ENCODE measurements at regions of chr2 and their contacts with region 1.

Region 1: GRCh38 chr2:144183727-144184126 is 336.2 kb downstream of the ZEB2 start:
- DNase-seq: peak; percentile 37 to 96 (median 71)
- ATAC-seq: peak; percentile 98
- H3K4me3 ChIP-seq: peak overlapping the region in 1 of 2 experiments; percentile 31
- H3K4me3 Mint-ChIP-seq: peak overlapping the region; percentile 76
- H3K27ac ChIP-seq: peak overlapping the region in 1 of 2 experiments; percentile 38
- H3K27ac Mint-ChIP-seq: peak overlapping the region; percentile 71
- H3K4me1 ChIP-seq: peaks cover 12% of the 10 kb centered on the region
- H3K4me1 Mint-ChIP-seq: peaks cover 30% of the 10 kb centered on the region
- H3K27me3 ChIP-seq: no peaks in the 10 kb centered on the region
- H3K27me3 Mint-ChIP-seq: no peaks in the 10 kb centered on the region
- CTCF ChIP-seq: no peak

Region 2: DNA sequence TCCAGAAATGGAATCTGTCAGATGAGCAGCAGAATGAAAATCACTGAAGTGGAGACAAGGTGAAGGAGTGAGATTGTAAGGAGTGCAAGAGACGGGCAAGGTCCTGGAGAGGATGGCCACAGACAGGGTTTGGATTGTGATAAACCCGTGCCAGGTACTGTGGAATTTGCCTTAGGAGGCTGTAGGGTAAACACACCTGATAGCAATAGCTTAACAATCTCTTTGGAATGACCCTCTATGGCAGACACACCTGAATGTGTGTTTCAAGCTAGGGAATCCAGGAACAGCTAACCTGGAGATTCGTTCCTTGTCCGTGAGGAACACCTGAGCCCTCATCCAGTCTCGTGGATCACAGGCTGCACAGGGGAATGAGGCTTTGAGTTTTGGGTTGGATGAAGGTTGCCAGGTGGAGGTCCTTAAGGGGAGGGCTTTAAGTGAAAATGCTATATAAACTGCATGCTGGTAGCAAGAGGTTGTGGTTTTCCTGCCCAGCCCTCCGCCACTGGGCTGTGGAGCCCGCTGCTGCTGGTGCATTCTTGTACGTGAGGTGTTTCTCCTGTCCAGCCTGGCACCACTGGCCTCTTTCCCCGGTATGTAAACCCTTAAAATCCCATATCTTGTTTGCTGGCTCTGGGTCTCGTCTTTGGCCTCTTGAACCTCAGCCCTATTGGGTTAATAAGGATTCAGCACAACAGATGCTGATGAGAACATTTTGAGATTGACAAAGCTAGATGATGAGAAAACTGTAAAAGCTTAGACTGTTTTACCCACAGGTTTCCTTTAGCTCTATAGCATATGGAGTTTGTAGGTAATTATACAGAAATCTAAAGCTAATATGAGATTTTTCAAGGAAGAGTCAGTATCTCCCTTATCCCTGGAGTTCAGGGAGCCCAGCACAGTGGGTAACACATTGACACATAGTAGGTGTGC is 936.6 kb before region 1 on chr2:
- CTCF ChIA-PET with region 1: no interaction called
- POLR2A ChIA-PET with region 1: no interaction called
- intact Hi-C with region 1: loop called in 1 of 2 experiments (anchors 10 kb)
- DNase-seq: peak in 6 of 9 experiments; percentile 16 to 68 (median 42)
- ATAC-seq: peak; percentile 60
- H3K4me3 ChIP-seq: peak overlapping the region; percentile 19 to 52
- H3K4me3 Mint-ChIP-seq: no peak overlapping the region
- H3K27ac ChIP-seq: peak overlapping the region; percentile 2 to 70
- H3K27ac Mint-ChIP-seq: no peak overlapping the region
- H3K4me1 ChIP-seq: peaks cover 28% of the 10 kb centered on the region
- H3K4me1 Mint-ChIP-seq: peaks cover 24% of the 10 kb centered on the region
- H3K27me3 ChIP-seq: no peaks in the 10 kb centered on the region
- H3K27me3 Mint-ChIP-seq: no peaks in the 10 kb centered on the region
- CTCF ChIP-seq: no peak

Region 3: GRCh38 chr2:144032566-144032965 is 151.2 kb before region 1 on chr2:
- CTCF ChIA-PET with region 1: no interaction called
- POLR2A ChIA-PET with region 1: no interaction called
- intact Hi-C with region 1: no loop called
- DNase-seq: no peak
- ATAC-seq: no peak
- H3K4me3 ChIP-seq: no peak overlapping the region
- H3K4me3 Mint-ChIP-seq: no peak overlapping the region
- H3K27ac ChIP-seq: no peak overlapping the region
- H3K27ac Mint-ChIP-seq: no peak overlapping the region
- H3K4me1 ChIP-seq: no peaks in the 10 kb centered on the region
- H3K4me1 Mint-ChIP-seq: no peaks in the 10 kb centered on the region
- H3K27me3 ChIP-seq: no peaks in the 10 kb centered on the region
- H3K27me3 Mint-ChIP-seq: no peaks in the 10 kb centered on the region
- CTCF ChIP-seq: no peak

Region 4: DNA sequence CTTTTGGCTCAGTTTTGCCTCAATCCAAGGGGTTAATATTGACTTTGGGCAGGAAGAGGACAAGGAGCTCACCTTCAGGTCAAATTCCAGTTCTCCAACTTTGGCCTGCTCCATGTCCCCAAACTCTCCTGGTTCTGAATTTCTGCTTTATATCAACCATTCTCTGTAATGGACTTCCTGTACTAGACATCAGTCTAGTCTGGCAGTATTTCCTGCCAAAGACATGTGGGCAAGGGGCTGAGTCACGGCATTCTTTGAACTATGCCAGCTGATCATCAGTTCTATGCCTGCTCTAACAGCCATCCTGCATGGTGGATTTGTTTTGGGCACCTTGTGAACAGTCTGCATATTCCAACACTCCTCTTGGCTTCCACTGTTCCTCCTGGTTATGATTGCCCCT is 136.8 kb after region 1 on chr2:
- CTCF ChIA-PET with region 1: no interaction called
- POLR2A ChIA-PET with region 1: no interaction called
- intact Hi-C with region 1: loop called in 1 of 2 experiments (anchors 2 kb)
- DNase-seq: peak in 8 of 9 experiments; percentile 41 to 87 (median 72)
- ATAC-seq: peak; percentile 53
- H3K4me3 ChIP-seq: no peak overlapping the region
- H3K4me3 Mint-ChIP-seq: peak overlapping the region; percentile 27
- H3K27ac ChIP-seq: peak overlapping the region in 1 of 2 experiments; percentile 64
- H3K27ac Mint-ChIP-seq: peak overlapping the region; percentile 86
- H3K4me1 ChIP-seq: peaks cover 29% of the 10 kb centered on the region
- H3K4me1 Mint-ChIP-seq: peaks cover 55% of the 10 kb centered on the region
- H3K27me3 ChIP-seq: no peaks in the 10 kb centered on the region
- H3K27me3 Mint-ChIP-seq: no peaks in the 10 kb centered on the region
- CTCF ChIP-seq: no peak

Region 5: GRCh38 chr2:144382849-144383248 is 199.1 kb after region 1 on chr2:
- CTCF ChIA-PET with region 1: no interaction called
- POLR2A ChIA-PET with region 1: no interaction called
- intact Hi-C with region 1: loop called in 1 of 2 experiments (anchors 5 kb)
- DNase-seq: peak in 4 of 9 experiments; percentile 26 to 89 (median 62)
- ATAC-seq: peak; percentile 93
- H3K4me3 ChIP-seq: no peak overlapping the region
- H3K4me3 Mint-ChIP-seq: peak overlapping the region; percentile 3
- H3K27ac ChIP-seq: no peak overlapping the region
- H3K27ac Mint-ChIP-seq: peak overlapping the region; percentile 15
- H3K4me1 ChIP-seq: peaks cover 20% of the 10 kb centered on the region
- H3K4me1 Mint-ChIP-seq: peaks cover 29% of the 10 kb centered on the region
- H3K27me3 ChIP-seq: no peaks in the 10 kb centered on the region
- H3K27me3 Mint-ChIP-seq: no peaks in the 10 kb centered on the region
- CTCF ChIP-seq: no peak

Region 6: GRCh38 chr2:144516981-144517865 is 333.5 kb after region 1 on chr2:
- CTCF ChIA-PET with region 1: no interaction called
- POLR2A ChIA-PET with region 1: no interaction called
- intact Hi-C with region 1: loop called in 1 of 2 experiments (anchors 5 kb)
- DNase-seq: peak in 7 of 9 experiments; percentile 31 to 88 (median 66)
- ATAC-seq: peak; percentile 67
- H3K4me3 ChIP-seq: peak overlapping the region; percentile 66 to 69
- H3K4me3 Mint-ChIP-seq: no peak overlapping the region
- H3K27ac ChIP-seq: peak overlapping the region; percentile 65 to 92
- H3K27ac Mint-ChIP-seq: peak overlapping the region; percentile 94
- H3K4me1 ChIP-seq: peaks cover 13% of the 10 kb centered on the region
- H3K4me1 Mint-ChIP-seq: peaks cover 21% of the 10 kb centered on the region
- H3K27me3 ChIP-seq: peaks cover 0 to 30% of the 10 kb centered on the region in 2 experiments
- H3K27me3 Mint-ChIP-seq: peaks cover 39% of the 10 kb centered on the region
- CTCF ChIP-seq: no peak

Measured in CD8-positive, alpha-beta T cell (primary cell).